ENCODE measurements at regions of chrX and their contacts with region 1.

Region 1: GRCh38 chrX:105190252-105190853 is 30.1 kb downstream of the TEX13A start:
- DNase-seq: peak; percentile 19
- H3K4me3 Mint-ChIP-seq: no peak overlapping the region
- H3K27ac Mint-ChIP-seq: no peak overlapping the region
- H3K4me1 Mint-ChIP-seq: no peaks in the 10 kb centered on the region
- H3K27me3 Mint-ChIP-seq: no peaks in the 10 kb centered on the region

Region 2: DNA sequence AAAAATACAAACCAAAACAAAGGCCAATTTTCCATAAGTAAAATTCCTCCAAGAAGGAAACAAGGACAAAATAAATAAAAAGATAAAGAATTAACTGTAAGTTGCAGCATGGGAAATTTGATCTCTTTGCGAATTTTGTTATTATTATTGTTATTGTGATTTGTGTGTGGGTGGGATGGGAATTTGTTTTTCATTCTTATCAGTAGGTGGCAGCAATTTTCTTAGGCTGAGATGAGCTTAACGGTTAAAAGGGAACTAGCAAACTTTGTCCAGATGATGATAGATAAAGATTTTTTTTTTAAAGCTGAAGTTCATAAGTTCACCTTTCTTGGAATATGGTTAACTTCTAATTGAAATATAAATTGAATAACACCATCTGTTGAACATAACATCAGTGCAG is 707.6 kb before region 1 on chrX:
- CTCF ChIA-PET with region 1: no interaction called
- intact Hi-C with region 1: loop called (anchors 5 kb)
- DNase-seq: no peak
- H3K4me3 Mint-ChIP-seq: no peak overlapping the region
- H3K27ac Mint-ChIP-seq: no peak overlapping the region
- H3K4me1 Mint-ChIP-seq: no peaks in the 10 kb centered on the region
- H3K27me3 Mint-ChIP-seq: peaks cover 2% of the 10 kb centered on the region

Region 3: GRCh38 chrX:104565791-104566680 is 624.3 kb before region 1 on chrX and contains the start of gene IL1RAPL2:
- CTCF ChIA-PET with region 1: no interaction called
- intact Hi-C with region 1: loop called (anchors 1 kb)
- DNase-seq: peak; percentile 42
- H3K4me3 Mint-ChIP-seq: no peak within 1 kb of the TSS
- H3K27ac Mint-ChIP-seq: no peak within 1 kb of the TSS
- H3K4me1 Mint-ChIP-seq: no peaks in the 10 kb centered on the region
- H3K27me3 Mint-ChIP-seq: peaks cover 25% of the 10 kb centered on the region
- total RNA-seq, gene IL1RAPL2: not detected

Region 4: GRCh38 chrX:104795804-104796203 is 394.5 kb before region 1 on chrX:
- CTCF ChIA-PET with region 1: no interaction called
- intact Hi-C with region 1: no loop called
- DNase-seq: no peak
- H3K4me3 Mint-ChIP-seq: no peak overlapping the region
- H3K27ac Mint-ChIP-seq: no peak overlapping the region
- H3K4me1 Mint-ChIP-seq: no peaks in the 10 kb centered on the region
- H3K27me3 Mint-ChIP-seq: no peaks in the 10 kb centered on the region

Region 5: GRCh38 chrX:104961926-104962325 is 228.4 kb before region 1 on chrX:
- CTCF ChIA-PET with region 1: no interaction called
- intact Hi-C with region 1: no loop called
- DNase-seq: no peak
- H3K4me3 Mint-ChIP-seq: no peak overlapping the region
- H3K27ac Mint-ChIP-seq: no peak overlapping the region
- H3K4me1 Mint-ChIP-seq: no peaks in the 10 kb centered on the region
- H3K27me3 Mint-ChIP-seq: no peaks in the 10 kb centered on the region

Measured in activated naive CD4-positive, alpha-beta T cell treated with anti-CD3 and anti-CD28 coated beads for 36 hours (primary cell).